K562 (cell line): ENCODE measurements at regions of chr3 and their contacts with region 1.

Region 1: GRCh38 chr3:124014366-124014942 is 22.5 kb upstream of the ROPN1 start:
- DNase-seq: no peak
- ATAC-seq: no peak
- H3K4me3 ChIP-seq: no peak overlapping the region
- H3K27ac ChIP-seq: no peak overlapping the region
- H3K4me1 ChIP-seq: no peaks in the 10 kb centered on the region
- H3K27me3 ChIP-seq: no peaks in the 10 kb centered on the region; a peak in 1 of 5 replicates
- CTCF ChIP-seq: no peak
- EP300 ChIP-seq: no peak
- POLR2A ChIP-seq: no peak
- RAD21 ChIP-seq: no peak

Region 2: DNA sequence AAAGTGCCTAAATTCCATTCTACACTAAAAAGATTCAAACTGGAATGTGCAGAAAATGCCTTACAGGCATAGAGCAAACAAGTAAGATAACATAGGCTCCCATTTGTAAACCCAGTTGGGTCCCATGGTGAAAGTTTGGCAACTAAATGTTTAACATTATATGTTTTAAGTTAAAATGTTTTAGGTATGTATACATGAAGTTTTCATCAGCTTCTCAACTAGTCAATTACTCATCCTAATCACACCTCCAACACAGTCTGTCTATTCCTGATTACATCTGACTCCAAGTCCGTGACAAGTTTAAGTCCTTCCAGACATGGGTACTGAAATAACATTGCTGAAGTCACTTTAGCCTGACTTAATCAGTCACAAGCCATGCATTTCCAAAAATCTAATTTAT is 155.3 kb before region 1 on chr3:
- CTCF ChIA-PET with region 1: no interaction called
- POLR2A ChIA-PET with region 1: no interaction called
- in situ Hi-C with region 1: no loop called
- intact Hi-C with region 1: no loop called
- DNase-seq: peak in 1 of 4 experiments; percentile 6
- ATAC-seq: no peak
- H3K4me3 ChIP-seq: no peak overlapping the region
- H3K27ac ChIP-seq: no peak overlapping the region
- H3K4me1 ChIP-seq: no peaks in the 10 kb centered on the region
- H3K27me3 ChIP-seq: peaks cover 0 to 3% of the 10 kb centered on the region in 2 experiments; a peak in 1 of 5 replicates
- CTCF ChIP-seq: no peak
- EP300 ChIP-seq: no peak
- POLR2A ChIP-seq: no peak
- RAD21 ChIP-seq: no peak

Region 3: DNA sequence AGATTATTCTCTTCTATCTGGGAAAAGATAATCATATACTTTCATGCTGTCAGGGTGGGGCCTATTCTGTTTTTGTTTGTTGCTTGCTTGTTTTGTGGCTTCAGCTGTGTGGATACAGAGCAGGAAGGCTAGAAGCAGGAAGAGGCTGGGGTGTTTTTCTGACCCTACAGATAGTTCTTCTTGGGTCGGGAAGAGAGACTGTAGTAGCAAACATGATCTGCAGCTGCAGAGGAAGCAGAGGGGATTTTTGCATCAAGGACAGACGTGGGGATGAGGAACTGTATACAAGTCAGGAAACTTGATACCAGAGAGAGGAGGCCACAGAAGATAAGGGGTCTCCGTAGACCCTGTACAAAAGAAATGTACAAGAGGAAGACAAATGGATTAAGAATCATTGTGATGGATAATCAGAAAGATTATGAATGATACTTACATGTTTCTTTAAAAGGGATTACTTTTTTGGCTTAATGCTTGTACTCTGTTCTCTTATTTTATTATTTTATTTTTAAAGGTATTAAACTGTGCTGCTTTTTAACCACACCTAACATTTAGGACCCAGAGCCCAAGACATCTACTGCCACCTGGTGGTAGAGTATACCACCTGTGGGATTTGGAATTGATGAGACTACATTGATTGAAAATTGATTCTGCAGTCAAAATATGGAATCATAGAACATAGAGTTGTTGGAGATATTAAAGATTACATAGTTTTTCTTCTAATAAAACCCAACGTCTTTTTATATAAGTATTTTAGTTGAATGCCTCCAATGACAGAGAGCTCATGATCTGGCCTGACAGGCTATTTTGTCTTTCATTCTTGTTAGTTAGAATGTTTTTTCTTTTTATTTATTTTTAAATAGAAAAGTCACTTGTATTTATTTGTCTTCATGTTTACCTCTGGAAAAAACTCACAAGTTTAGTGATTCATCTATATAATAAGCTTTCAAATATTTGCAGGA is 64.8 kb after region 1 on chr3:
- CTCF ChIA-PET with region 1: interaction called, 9 read pairs
- POLR2A ChIA-PET with region 1: no interaction called
- in situ Hi-C with region 1: no loop called
- intact Hi-C with region 1: loop called (anchors 1 kb)
- DNase-seq: peak; percentile 17 to 40 (median 33)
- ATAC-seq: peak; percentile 55; the same call in 1 of the 3 replicates
- H3K4me3 ChIP-seq: no peak overlapping the region
- H3K27ac ChIP-seq: no peak overlapping the region
- H3K4me1 ChIP-seq: no peaks in the 10 kb centered on the region
- H3K27me3 ChIP-seq: peaks cover 0 to 12% of the 10 kb centered on the region in 2 experiments; a peak in 2 of 5 replicates
- CTCF ChIP-seq: peak; percentile 40 to 69 (median 47); a peak in 3 of 6 replicates
- EP300 ChIP-seq: no peak
- POLR2A ChIP-seq: no peak
- RAD21 ChIP-seq: peak; percentile 61 to 75

Region 4: DNA sequence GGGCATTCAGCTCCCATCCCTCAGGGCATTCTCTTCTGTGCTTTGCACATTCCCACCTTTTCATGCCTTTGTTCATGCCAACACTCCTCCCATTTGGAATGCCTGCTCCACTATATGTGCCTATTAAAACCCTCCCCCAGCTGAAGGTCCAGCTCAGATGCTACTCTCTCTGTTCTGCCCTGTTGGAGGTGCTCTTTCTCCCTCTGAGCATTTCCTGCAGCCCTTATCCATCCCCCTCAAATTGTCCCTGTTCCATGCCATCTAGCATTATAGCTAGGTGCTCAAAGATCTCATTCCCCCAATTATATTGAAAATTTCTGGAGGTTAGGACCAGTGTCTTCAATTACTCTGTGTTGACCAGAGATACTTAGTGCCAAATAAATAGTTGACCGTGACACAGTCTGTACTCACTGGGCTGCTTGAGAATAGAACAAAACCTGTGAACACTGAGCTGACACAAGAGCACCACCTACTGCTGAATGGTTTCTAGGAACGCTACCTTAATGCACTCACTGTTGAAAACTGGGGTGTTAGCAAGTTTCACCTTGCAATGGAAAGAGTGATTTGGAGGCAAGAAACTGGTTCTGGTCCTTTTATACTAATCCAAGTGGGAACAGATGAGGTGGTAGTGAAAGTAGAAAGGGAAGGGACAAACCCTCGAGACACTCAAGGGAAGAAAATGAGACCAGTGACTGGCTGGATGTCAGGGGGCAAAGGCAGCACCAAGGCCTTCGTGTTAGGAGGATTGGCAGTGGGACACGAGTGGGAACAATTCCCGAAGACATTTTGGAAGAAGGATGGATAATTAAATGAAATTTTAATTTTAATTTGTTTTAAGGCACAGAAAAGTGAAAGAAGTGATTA is 267.2 kb after region 1 on chr3:
- CTCF ChIA-PET with region 1: interaction called, 6 read pairs
- POLR2A ChIA-PET with region 1: no interaction called
- in situ Hi-C with region 1: no loop called
- intact Hi-C with region 1: loop called (anchors 2 kb)
- DNase-seq: peak; percentile 3 to 17 (median 8)
- ATAC-seq: peak; percentile 57; the same call in 1 of the 3 replicates
- H3K4me3 ChIP-seq: no peak overlapping the region
- H3K27ac ChIP-seq: no peak overlapping the region
- H3K4me1 ChIP-seq: no peaks in the 10 kb centered on the region
- H3K27me3 ChIP-seq: no peaks in the 10 kb centered on the region
- CTCF ChIP-seq: peak; percentile 20 to 46 (median 44); a peak in 3 of 6 replicates
- EP300 ChIP-seq: no peak
- POLR2A ChIP-seq: no peak
- RAD21 ChIP-seq: peak in 1 of 2 experiments; percentile 48; a peak in 2 of 4 replicates

Region 5: GRCh38 chr3:124467980-124468902 is 453.8 kb after region 1 on chr3:
- CTCF ChIA-PET with region 1: no interaction called
- POLR2A ChIA-PET with region 1: no interaction called
- in situ Hi-C with region 1: loop called (anchors 10 kb)
- intact Hi-C with region 1: loop called (anchors 10 kb)
- DNase-seq: peak; percentile 56 to 74 (median 72)
- ATAC-seq: peak; percentile 93
- H3K4me3 ChIP-seq: no peak overlapping the region
- H3K27ac ChIP-seq: no peak overlapping the region
- H3K4me1 ChIP-seq: no peaks in the 10 kb centered on the region
- H3K27me3 ChIP-seq: no peaks in the 10 kb centered on the region
- CTCF ChIP-seq: peak; percentile 82 to 87 (median 83)
- EP300 ChIP-seq: no peak
- POLR2A ChIP-seq: no peak
- RAD21 ChIP-seq: peak; percentile 71 to 88

Region 6: DNA sequence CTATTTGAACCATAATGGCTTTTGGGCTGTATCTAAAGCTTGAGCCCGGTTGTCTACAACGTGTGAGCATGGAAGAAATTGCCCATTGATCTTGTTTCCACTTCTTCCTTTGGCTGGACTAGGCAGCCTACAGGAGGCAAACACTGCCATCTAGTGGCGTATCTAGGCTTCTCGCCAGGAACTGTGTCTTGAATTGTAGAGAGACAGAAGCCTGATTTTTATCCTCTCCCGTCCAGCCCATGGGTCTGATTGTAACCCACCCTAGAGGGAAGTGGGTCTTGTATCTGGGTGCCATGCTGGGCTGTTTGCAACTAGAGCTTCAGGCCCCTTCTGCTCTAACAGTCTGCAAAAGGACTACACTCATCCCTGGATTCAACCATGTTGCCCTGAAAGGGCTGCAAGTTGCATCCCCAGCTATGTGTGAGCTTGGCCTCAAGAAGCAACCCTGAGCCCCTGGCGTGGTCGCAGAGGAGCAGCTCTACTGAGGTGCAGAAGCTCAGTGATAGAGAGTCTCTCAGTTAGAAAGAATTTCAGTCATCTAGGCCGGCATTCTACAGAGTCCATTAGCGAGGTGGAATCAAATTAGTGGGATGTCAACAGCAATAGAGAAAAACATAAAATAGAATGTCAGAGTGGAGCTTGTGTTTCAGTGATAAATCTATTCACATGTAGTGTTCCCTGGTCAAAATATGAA is 545.6 kb after region 1 on chr3:
- CTCF ChIA-PET with region 1: no interaction called
- POLR2A ChIA-PET with region 1: no interaction called
- in situ Hi-C with region 1: no loop called
- intact Hi-C with region 1: loop called (anchors 5 kb)
- DNase-seq: peak; percentile 62 to 77 (median 66)
- ATAC-seq: peak; percentile 91
- H3K4me3 ChIP-seq: no peak overlapping the region
- H3K27ac ChIP-seq: no peak overlapping the region
- H3K4me1 ChIP-seq: peaks cover 0 to 5% of the 10 kb centered on the region in 2 experiments; a peak in 3 of 5 replicates
- H3K27me3 ChIP-seq: peaks cover 0 to 9% of the 10 kb centered on the region in 2 experiments; a peak in 1 of 5 replicates
- CTCF ChIP-seq: peak; percentile 73 to 79 (median 77)
- EP300 ChIP-seq: no peak
- POLR2A ChIP-seq: no peak
- RAD21 ChIP-seq: peak; percentile 42 to 67

Region 7: GRCh38 chr3:125087768-125088391 is 1073.4 kb after region 1 on chr3:
- CTCF ChIA-PET with region 1: no interaction called
- POLR2A ChIA-PET with region 1: no interaction called
- in situ Hi-C with region 1: no loop called
- intact Hi-C with region 1: no loop called
- DNase-seq: no peak
- ATAC-seq: no peak
- H3K4me3 ChIP-seq: no peak overlapping the region
- H3K27ac ChIP-seq: no peak overlapping the region
- H3K4me1 ChIP-seq: no peaks in the 10 kb centered on the region
- H3K27me3 ChIP-seq: peaks cover 0 to 8% of the 10 kb centered on the region in 2 experiments; a peak in 2 of 5 replicates
- CTCF ChIP-seq: no peak
- EP300 ChIP-seq: no peak
- POLR2A ChIP-seq: no peak
- RAD21 ChIP-seq: no peak